Natural killer cell (primary cell): ENCODE measurements at regions of chr14 and their contacts with region 1.

Region 1: DNA sequence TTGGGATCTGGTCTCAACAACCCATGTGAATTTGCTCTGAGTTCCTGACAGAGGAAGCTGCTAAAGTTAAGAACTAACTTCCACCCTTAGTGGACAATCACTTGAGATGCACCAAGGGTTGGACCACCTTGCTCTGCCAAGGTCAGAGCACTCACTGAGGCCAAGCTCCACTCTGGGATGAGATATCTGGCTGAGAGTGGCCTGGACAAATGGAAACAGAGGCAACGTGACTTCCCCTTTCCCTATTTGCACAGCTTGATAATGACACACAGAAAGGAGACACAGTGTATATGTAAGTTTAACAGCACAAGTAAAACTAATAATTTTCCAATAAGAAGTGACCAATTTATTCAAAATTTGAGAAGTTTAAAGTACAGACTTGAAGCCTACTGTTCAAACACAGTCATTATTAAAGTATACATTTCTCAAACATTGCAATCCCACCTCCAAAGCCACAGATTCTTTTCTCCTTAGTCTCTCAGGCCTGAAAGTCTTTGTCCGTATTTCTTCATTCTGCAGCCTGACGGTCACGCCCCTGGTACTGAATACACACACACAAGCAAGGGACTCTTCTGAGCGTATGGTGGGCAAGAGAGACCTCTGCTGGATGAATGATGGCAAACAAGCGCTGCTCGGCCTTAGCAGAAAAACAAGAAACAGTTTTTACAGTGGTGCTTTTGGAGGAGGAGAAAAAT is 28.6 kb downstream of the TMEM30B start:
- DNase-seq: peak; percentile 31 to 80
- ATAC-seq: peak; percentile 80 to 100 (median 95)
- H3K4me3 ChIP-seq: no peak overlapping the region
- H3K4me3 Mint-ChIP-seq: no peak overlapping the region
- H3K27ac ChIP-seq: no peak overlapping the region
- H3K27ac Mint-ChIP-seq: no peak overlapping the region
- H3K4me1 ChIP-seq: no peaks in the 10 kb centered on the region
- H3K4me1 Mint-ChIP-seq: peaks cover 0 to 5% of the 10 kb centered on the region in 2 donors
- H3K27me3 ChIP-seq: no peaks in the 10 kb centered on the region
- H3K27me3 Mint-ChIP-seq: peaks cover 19 to 37% of the 10 kb centered on the region in 2 donors
- CTCF ChIP-seq: peak; percentile 66

Region 2: GRCh38 chr14:60349663-60350365 is 902.7 kb before region 1 on chr14:
- intact Hi-C with region 1: loop called (anchors 1 kb)
- DNase-seq: peak in 1 of 2 donors; percentile 63
- ATAC-seq: peak in 1 of 3 donors; percentile 55
- H3K4me3 ChIP-seq: no peak overlapping the region
- H3K4me3 Mint-ChIP-seq: no peak overlapping the region
- H3K27ac ChIP-seq: no peak overlapping the region
- H3K27ac Mint-ChIP-seq: no peak overlapping the region
- H3K4me1 ChIP-seq: no peaks in the 10 kb centered on the region
- H3K4me1 Mint-ChIP-seq: peaks cover 0 to 5% of the 10 kb centered on the region in 2 donors
- H3K27me3 ChIP-seq: no peaks in the 10 kb centered on the region
- H3K27me3 Mint-ChIP-seq: peaks cover 20 to 32% of the 10 kb centered on the region in 2 donors
- CTCF ChIP-seq: peak; percentile 69

Region 3: DNA sequence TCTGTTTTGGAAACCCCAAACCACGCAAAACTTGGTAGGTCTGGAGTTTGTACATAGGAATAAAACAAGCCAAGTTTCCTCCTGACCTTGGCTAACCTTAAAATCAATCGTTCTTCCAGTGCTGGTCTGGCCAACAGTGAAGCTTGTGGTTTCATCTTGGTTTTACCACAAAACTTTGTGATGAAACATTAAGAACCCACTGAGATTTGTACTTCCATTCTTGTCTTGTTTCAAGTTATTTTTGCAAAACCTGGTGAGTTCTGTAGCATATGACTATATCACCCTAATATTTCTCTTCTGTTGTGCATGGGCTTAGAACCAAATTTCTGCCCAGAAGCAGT is 629.6 kb before region 1 on chr14:
- intact Hi-C with region 1: loop called (anchors 1 kb)
- DNase-seq: no peak
- ATAC-seq: no peak
- H3K4me3 ChIP-seq: no peak overlapping the region
- H3K4me3 Mint-ChIP-seq: no peak overlapping the region
- H3K27ac ChIP-seq: no peak overlapping the region
- H3K27ac Mint-ChIP-seq: no peak overlapping the region
- H3K4me1 ChIP-seq: no peaks in the 10 kb centered on the region
- H3K4me1 Mint-ChIP-seq: no peaks in the 10 kb centered on the region
- H3K27me3 ChIP-seq: peaks cover 7% of the 10 kb centered on the region
- H3K27me3 Mint-ChIP-seq: peaks cover 10 to 16% of the 10 kb centered on the region in 2 donors
- CTCF ChIP-seq: no peak

Region 4: DNA sequence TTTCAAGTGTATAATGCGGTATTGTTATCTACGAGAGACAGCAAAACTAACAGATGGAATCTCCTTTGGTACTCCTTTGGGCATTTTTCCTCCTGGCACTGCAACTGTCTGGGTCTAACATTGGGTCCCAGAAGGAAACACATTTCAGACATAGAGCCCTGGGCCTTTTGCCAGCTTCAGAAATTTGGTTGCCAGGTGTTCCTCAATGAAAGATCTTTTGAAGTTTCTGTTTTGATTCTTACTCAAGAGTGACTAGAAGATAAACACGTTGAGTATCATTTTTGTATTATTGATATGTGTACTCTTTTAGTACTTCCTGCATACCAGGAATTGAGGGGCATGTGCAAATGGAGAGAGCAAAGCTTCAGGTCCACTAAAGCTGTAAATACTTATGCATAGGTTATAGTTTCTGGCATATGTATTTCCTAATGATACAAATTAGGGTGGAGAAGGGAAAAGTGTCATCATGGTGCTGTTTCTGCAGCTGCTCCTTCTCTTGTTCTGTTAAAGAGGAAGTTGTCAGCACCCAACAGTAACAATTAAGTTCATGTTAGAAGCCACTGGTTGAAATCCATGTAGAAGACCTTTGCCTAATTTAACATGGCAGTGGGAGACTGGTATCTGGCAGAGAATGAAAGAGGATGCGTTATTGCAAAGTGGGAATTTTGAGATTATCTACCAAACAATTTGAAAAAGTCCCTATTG is 217.9 kb before region 1 on chr14:
- intact Hi-C with region 1: no loop called
- DNase-seq: no peak
- ATAC-seq: no peak
- H3K4me3 ChIP-seq: no peak overlapping the region
- H3K4me3 Mint-ChIP-seq: no peak overlapping the region
- H3K27ac ChIP-seq: no peak overlapping the region
- H3K27ac Mint-ChIP-seq: no peak overlapping the region
- H3K4me1 ChIP-seq: no peaks in the 10 kb centered on the region
- H3K4me1 Mint-ChIP-seq: no peaks in the 10 kb centered on the region
- H3K27me3 ChIP-seq: no peaks in the 10 kb centered on the region
- H3K27me3 Mint-ChIP-seq: no peaks in the 10 kb centered on the region
- CTCF ChIP-seq: no peak